Activated T-helper 1 cell treated with anti-CD3 and anti-CD28 coated beads, Interleukin-12 subunit alpha, Interleukin-12 subunit beta, Interleukin-2, Interleukin-4 antibody, amounts not matched to agents 30 ng/mL and 10 ng/mL and 1 ng/mL, durations not matched to agents 14 hours and 24 hours and 36 hours (primary cell): ENCODE measurements at regions of chr6 and their contacts with region 1.

Region 1: GRCh38 chr6:104940881-104941728 is 15.8 kb upstream of the LIN28B start:
- DNase-seq: no peak
- H3K4me3 Mint-ChIP-seq: peak overlapping the region; percentile 64
- H3K27ac Mint-ChIP-seq: no peak overlapping the region
- H3K4me1 Mint-ChIP-seq: peaks cover 7% of the 10 kb centered on the region
- H3K27me3 Mint-ChIP-seq: peaks cover 29% of the 10 kb centered on the region

Region 2: GRCh38 chr6:104789770-104790190 is 151.3 kb before region 1 on chr6:
- intact Hi-C with region 1: loop called (anchors 5 kb)
- DNase-seq: no peak
- H3K4me3 Mint-ChIP-seq: peak overlapping the region; percentile 62
- H3K27ac Mint-ChIP-seq: peak overlapping the region; percentile 85
- H3K4me1 Mint-ChIP-seq: peaks cover 42% of the 10 kb centered on the region
- H3K27me3 Mint-ChIP-seq: no peaks in the 10 kb centered on the region

Region 3: DNA sequence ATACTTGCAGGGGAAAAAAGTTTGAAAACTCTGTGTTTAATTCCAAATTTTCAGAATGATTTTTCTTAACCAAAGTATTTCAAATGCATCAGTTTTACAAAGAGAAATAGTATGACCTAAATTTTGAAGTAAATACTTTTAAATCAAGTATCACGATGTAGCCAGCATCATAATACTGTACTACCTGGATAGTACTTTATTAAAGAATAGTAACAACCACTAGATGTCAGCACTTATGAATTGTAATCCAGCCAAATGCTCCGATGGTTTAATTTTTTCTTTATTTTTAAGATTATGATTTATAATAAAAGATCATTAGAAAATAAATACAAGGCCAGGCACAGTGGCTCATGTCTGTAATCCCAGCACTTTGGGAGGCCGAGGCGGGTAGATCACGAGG is 44.2 kb before region 1 on chr6:
- intact Hi-C with region 1: loop called (anchors 5 kb)
- DNase-seq: no peak
- H3K4me3 Mint-ChIP-seq: no peak overlapping the region
- H3K27ac Mint-ChIP-seq: no peak overlapping the region
- H3K4me1 Mint-ChIP-seq: no peaks in the 10 kb centered on the region
- H3K27me3 Mint-ChIP-seq: peaks cover 2% of the 10 kb centered on the region

Region 4: DNA sequence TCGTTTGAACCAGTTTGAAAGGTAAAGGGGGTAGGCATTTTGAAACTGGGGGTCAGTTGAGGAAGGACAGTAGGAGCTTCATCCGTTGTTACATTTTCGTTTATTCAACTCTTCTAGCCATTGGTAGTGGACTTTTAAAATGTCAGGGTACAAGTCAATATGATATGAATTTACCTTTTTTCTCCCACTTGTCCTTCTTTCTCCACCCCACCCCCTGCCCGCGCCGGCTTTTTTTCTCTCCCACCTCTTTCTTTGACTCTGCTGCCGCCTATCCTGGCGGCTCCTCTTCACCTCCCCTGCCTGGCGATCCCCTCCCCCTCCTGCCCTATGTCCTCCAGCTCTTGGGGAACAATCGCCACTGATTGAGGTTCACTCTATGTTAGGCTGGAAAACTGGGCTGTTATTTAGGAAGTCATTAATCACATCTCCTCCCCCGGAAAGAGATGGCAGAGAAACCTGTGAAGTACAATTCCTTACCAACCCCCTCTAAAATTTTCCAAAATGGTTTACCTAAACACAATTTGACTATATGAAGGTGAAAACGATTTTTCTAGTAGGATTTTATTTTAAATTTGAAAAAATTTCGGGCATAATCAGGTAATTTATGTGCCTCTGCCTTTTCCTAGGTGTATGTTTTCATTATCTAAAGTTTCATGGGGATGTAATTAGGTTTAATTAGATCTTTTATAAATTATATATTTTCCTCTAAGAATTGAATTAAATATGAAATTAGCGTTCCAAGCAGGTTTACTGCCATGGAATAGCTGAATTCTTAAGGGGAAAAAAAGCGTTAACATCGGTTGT is 15.0 kb after region 1 on chr6:
- intact Hi-C with region 1: loop called (anchors 1 kb)
- DNase-seq: no peak
- H3K4me3 Mint-ChIP-seq: no peak overlapping the region
- H3K27ac Mint-ChIP-seq: no peak overlapping the region
- H3K4me1 Mint-ChIP-seq: peaks cover 26% of the 10 kb centered on the region
- H3K27me3 Mint-ChIP-seq: peaks cover 75% of the 10 kb centered on the region

Region 5: DNA sequence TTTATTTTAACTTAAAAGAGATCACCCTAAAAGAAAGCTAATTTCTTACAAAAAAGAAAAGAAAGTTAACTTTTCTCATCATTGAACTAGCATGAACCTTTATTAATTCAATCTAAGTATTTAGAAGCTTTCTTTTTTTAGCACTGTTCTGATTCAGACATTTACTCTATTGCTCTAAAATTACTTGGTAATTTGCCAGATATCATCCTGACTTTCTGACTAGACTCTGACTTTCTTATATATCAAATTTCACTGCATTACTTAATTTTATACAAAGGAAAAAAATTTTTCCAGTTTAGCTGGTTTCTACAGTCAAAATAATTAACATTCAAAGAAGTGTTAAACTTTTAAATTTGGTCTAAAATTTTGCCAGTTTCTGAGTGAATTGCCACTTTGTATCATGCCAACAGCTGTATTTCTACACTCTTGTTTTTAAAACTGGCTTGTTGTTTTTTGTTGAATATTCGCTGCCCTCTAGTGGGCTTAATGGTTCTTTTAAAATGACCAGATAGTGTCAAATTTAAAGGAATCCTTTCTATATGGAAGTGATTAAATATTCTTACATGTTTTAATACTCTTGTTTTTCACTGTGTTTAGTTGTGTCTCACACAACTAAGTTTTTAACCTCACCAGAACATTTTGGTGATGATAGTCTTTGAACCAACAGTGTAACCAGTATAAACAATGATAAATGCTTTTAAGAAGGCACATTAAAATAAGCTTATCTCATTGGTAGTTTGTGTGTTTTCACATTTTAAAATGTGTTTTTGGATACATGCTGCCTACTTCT is 136.7 kb after region 1 on chr6:
- intact Hi-C with region 1: loop called (anchors 1 kb)
- DNase-seq: no peak
- H3K4me3 Mint-ChIP-seq: no peak overlapping the region
- H3K27ac Mint-ChIP-seq: no peak overlapping the region
- H3K4me1 Mint-ChIP-seq: no peaks in the 10 kb centered on the region
- H3K27me3 Mint-ChIP-seq: peaks cover 21% of the 10 kb centered on the region